Right cardiac atrium (tissue), 5 donors: ENCODE measurements at regions of chr5 and their contacts with region 1.

Region 1: DNA sequence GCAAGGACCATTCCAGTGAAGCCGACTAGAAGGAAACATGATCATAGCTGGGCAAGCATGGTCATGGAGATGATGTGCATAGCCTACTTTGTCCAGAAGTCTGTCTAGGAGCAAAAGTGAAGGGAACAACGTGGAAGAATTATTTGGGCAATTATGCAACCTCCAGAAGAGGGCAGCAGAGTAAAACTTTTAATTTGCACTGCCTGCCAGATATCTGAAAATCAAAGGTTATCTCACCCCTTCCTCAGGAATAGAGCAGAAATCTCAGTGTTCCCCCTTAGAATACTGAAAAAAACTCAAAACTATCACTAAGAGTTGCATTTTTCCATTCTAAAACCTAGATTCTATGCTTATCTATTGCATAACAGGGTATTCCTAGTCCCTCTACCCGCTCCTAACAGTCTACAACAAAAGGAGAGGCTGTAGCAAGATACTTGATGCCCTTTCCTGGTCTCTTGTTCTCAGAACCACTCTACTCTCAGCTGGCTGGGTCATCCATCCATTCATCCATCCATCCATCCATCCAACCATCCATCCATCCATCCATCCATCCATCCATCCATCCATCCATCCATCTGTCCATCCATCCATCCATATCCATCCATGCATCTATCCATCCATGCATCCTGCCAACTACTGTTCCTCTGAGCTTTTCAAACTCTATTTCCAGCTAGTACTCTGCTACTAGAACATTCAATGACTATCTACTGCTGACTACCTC is 8.4 kb upstream of the SETD9 start:
- DNase-seq: no peak
- ATAC-seq: peak in 1 of 2 donors; percentile 47
- H3K4me3 ChIP-seq: no peak overlapping the region
- H3K27ac ChIP-seq: no peak overlapping the region
- H3K4me1 ChIP-seq: no peaks in the 10 kb centered on the region
- H3K27me3 ChIP-seq: no peaks in the 10 kb centered on the region

Region 2: GRCh38 chr5:56802205-56802604 is 98.8 kb before region 1 on chr5:
- intact Hi-C with region 1: no loop called
- DNase-seq: no peak
- ATAC-seq: peak in 1 of 2 donors; percentile 75
- H3K4me3 ChIP-seq: no peak overlapping the region
- H3K27ac ChIP-seq: no peak overlapping the region
- H3K4me1 ChIP-seq: no peaks in the 10 kb centered on the region
- H3K27me3 ChIP-seq: no peaks in the 10 kb centered on the region

Region 3: DNA sequence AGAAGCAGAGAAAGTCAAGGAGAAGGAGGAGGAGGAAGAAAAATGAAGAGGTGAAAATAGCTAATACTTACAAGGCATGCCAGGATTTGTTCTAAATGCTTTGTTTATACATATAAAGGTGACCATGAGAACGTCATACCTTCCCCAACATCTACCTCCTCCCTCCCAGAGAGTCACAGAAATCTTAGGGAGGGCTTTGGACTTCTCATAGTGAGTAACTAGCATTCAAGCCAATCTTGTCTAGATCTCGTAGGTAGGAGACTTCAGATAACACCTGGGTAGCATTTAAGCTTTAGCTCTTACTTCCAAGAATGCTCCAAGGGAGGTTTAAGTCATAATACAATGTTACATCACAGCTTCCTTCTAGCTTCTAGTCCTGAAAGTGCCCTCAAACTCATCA is 236.4 kb after region 1 on chr5:
- intact Hi-C with region 1: loop called in 2 of 4 experiments (anchors 5 kb)
- DNase-seq: no peak
- ATAC-seq: no peak
- H3K4me3 ChIP-seq: no peak overlapping the region
- H3K27ac ChIP-seq: no peak overlapping the region
- H3K4me1 ChIP-seq: no peaks in the 10 kb centered on the region
- H3K27me3 ChIP-seq: no peaks in the 10 kb centered on the region